Activated naive CD4-positive, alpha-beta T cell treated with anti-CD3 and anti-CD28 coated beads for 36 hours (primary cell): ENCODE measurements at regions of chr12 and their contacts with region 1.

Region 1: DNA sequence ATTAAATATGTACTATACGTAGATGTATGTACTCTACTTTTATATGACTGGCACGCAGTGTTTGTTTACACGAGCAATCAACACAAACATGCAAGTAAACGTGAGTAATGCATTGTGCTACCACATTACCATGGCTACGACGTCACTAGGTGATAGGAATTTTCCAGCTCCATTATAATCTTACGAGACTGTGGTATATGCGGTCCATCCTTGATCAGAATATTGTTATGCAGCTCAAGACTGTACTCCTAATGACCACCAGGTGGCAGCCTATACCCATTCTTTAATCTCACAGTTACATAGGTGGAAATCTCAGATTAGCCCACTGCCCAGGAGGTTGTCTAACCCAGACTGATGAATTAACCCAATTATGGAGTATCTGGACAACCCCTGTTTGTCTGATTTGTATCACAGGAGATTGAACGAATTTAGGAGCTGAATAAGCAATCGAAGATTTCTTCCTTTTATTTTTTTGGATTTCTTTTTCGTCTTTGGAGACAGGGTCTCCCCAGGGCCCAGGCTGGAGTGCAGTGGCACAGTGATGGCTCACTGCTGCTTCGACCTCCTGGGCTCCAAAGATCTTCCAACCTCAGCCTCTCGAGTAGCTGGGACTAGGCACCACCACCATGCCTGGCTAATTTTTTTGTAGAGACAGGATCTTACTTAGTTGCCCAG is 8.7 kb upstream of the TESPA1 start:
- DNase-seq: peak; percentile 72
- H3K4me3 Mint-ChIP-seq: no peak overlapping the region
- H3K27ac Mint-ChIP-seq: no peak overlapping the region
- H3K4me1 Mint-ChIP-seq: peaks cover 41% of the 10 kb centered on the region
- H3K27me3 Mint-ChIP-seq: no peaks in the 10 kb centered on the region

Region 2: DNA sequence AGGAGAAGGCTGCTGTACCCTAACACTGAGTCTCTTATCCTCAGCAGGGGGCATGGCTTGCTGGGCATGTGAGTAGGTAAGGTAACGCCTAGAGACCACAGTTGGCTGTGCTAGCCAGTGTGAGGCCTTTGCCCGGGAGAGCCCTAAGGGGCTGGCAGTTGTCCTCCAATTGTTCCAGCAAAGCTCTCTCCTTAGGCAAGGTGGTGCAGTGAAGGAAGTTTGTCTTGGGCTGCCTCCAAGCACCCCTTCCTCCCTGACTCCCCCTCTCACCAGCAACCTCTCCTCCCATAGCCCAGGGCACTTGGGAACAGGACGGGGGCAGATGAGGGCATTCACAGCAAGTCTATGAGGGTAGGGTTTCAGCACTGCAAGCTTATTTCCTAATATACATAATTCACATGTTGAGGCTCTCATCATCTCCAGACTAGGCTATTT is 381.6 kb before region 1 on chr12:
- CTCF ChIA-PET with region 1: no interaction called
- intact Hi-C with region 1: no loop called
- DNase-seq: no peak
- H3K4me3 Mint-ChIP-seq: no peak overlapping the region
- H3K27ac Mint-ChIP-seq: no peak overlapping the region
- H3K4me1 Mint-ChIP-seq: no peaks in the 10 kb centered on the region
- H3K27me3 Mint-ChIP-seq: peaks cover 3% of the 10 kb centered on the region

Region 3: GRCh38 chr12:54723379-54724256 is 269.7 kb before region 1 on chr12:
- CTCF ChIA-PET with region 1: interaction called, 3 read pairs
- intact Hi-C with region 1: loop called (anchors 1 kb)
- DNase-seq: peak; percentile 46
- H3K4me3 Mint-ChIP-seq: no peak overlapping the region
- H3K27ac Mint-ChIP-seq: no peak overlapping the region
- H3K4me1 Mint-ChIP-seq: peaks cover 19% of the 10 kb centered on the region
- H3K27me3 Mint-ChIP-seq: no peaks in the 10 kb centered on the region

Region 4: DNA sequence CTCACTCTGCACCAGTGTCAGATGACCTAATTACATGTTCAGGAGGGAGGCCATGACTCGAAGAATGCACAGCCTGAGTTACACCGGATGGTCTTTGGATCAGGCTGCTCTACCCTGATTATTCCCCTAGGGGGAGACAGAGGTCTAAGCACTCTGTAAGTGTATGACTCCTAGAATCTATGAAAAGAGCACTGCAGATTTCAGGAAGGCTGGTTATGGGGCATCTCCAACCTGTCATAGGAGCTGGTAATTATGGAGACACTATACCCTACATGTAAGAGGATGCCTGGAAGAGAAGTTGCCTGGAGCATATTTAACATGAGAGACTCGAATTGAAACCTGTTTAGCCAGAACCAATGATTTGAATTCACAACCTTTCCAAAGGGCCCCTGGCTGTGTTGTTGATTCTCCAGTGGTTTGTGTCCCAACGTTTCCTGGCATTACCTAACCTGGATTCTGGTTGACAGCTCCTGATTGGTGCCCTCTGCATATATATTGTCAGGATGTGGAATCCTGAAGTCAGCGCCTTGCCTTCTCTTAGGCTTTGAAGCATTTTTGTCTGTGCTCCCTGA is 139.2 kb before region 1 on chr12 and contains the start of gene MUCL1:
- CTCF ChIA-PET with region 1: interaction called, 17 read pairs
- intact Hi-C with region 1: loop called (anchors 1 kb)
- DNase-seq: peak; percentile 89
- H3K4me3 Mint-ChIP-seq: no peak within 1 kb of the TSS
- H3K27ac Mint-ChIP-seq: no peak within 1 kb of the TSS
- H3K4me1 Mint-ChIP-seq: peaks cover 16% of the 10 kb centered on the region
- H3K27me3 Mint-ChIP-seq: no peaks in the 10 kb centered on the region
- total RNA-seq, gene MUCL1: not detected

Region 5: GRCh38 chr12:54967461-54967860 is 25.8 kb before region 1 on chr12:
- CTCF ChIA-PET with region 1: interaction called, 12 read pairs
- intact Hi-C with region 1: no loop called
- DNase-seq: peak; percentile 47
- H3K4me3 Mint-ChIP-seq: no peak overlapping the region
- H3K27ac Mint-ChIP-seq: peak overlapping the region; percentile 33
- H3K4me1 Mint-ChIP-seq: peaks cover 78% of the 10 kb centered on the region
- H3K27me3 Mint-ChIP-seq: no peaks in the 10 kb centered on the region

Region 6: GRCh38 chr12:55024565-55024964 is 31.3 kb after region 1 on chr12:
- CTCF ChIA-PET with region 1: interaction called, 13 read pairs
- intact Hi-C with region 1: no loop called
- DNase-seq: no peak
- H3K4me3 Mint-ChIP-seq: no peak overlapping the region
- H3K27ac Mint-ChIP-seq: no peak overlapping the region
- H3K4me1 Mint-ChIP-seq: peaks cover 7% of the 10 kb centered on the region
- H3K27me3 Mint-ChIP-seq: peaks cover 24% of the 10 kb centered on the region

Region 7: GRCh38 chr12:55619354-55620138 is 626.2 kb after region 1 on chr12:
- CTCF ChIA-PET with region 1: no interaction called
- intact Hi-C with region 1: loop called (anchors 2 kb)
- DNase-seq: peak; percentile 62
- H3K4me3 Mint-ChIP-seq: no peak overlapping the region
- H3K27ac Mint-ChIP-seq: no peak overlapping the region
- H3K4me1 Mint-ChIP-seq: peaks cover 10% of the 10 kb centered on the region
- H3K27me3 Mint-ChIP-seq: peaks cover 44% of the 10 kb centered on the region